Activated B cell treated with CpG ODN at 0.5 μM for 24 hours (primary cell): ENCODE measurements at regions of chr16 and their contacts with region 1.

Region 1: DNA sequence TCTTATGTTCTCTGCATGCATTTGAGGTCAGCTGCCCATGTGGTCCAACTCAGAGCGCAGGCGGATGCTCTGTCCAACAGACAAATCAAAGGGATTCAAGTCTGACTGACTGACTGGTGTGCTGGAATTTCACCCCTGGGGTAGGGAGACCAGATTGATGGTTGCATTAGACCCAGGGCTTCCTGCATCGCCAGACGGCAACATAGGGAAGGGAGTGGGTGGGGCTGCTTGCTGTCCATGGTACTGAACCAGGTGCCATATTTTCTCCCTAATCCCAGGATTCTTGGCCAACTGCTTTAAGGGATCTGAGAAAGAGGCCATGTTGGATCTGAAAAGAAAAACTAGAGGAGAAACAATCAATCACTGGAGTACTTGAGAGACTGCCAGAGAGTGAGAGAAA is 332.0 kb downstream of the XYLT1 start:
- DNase-seq: no peak
- ATAC-seq: no peak
- H3K4me3 Mint-ChIP-seq: no peak overlapping the region
- H3K27ac Mint-ChIP-seq: no peak overlapping the region
- H3K4me1 Mint-ChIP-seq: peaks cover 11% of the 10 kb centered on the region
- H3K27me3 Mint-ChIP-seq: no peaks in the 10 kb centered on the region
- CTCF ChIP-seq: no peak

Region 2: GRCh38 chr16:17116595-17117296 is 22.1 kb before region 1 on chr16:
- CTCF ChIA-PET with region 1: no interaction called
- POLR2A ChIA-PET with region 1: interaction called, 16 read pairs
- intact Hi-C with region 1: no loop called
- DNase-seq: no peak
- ATAC-seq: no peak
- H3K4me3 Mint-ChIP-seq: no peak overlapping the region
- H3K27ac Mint-ChIP-seq: no peak overlapping the region
- H3K4me1 Mint-ChIP-seq: no peaks in the 10 kb centered on the region
- H3K27me3 Mint-ChIP-seq: no peaks in the 10 kb centered on the region
- CTCF ChIP-seq: no peak